T-cell (primary cell): ENCODE measurements at regions of chr3 and their contacts with region 1.

Region 1: DNA sequence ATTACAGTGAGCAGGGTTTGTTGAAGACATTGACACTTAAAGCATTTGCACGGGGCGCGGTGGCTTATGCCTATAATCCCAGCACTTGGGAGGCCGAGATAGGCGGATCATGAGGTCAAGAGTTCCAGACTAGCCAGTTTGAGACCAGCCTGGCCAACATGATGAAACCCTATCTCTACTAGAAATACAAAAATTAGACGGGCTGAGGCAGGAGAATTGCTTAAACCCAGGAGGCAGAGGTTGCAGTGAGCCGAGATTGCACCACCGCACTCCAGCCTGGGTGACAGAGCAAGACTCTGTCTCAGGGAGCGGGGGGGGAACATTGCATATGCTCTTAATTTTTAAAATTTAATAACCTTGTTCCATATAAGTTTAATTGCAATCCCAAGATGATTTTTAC is 11.9 kb downstream of the STT3B start:
- DNase-seq: no peak
- ATAC-seq: peak in 1 of 4 experiments; percentile 35
- H3K4me3 ChIP-seq: no peak overlapping the region
- H3K4me3 Mint-ChIP-seq: peak overlapping the region; percentile 22 to 46 (median 44)
- H3K27ac ChIP-seq: no peak overlapping the region
- H3K27ac Mint-ChIP-seq: peak overlapping the region; percentile 47 to 49
- H3K4me1 ChIP-seq: peaks cover 15 to 17% of the 10 kb centered on the region in 2 experiments
- H3K4me1 Mint-ChIP-seq: peaks cover 86 to 95% (median 87%) of the 10 kb centered on the region in 3 donors
- H3K27me3 ChIP-seq: no peaks in the 10 kb centered on the region
- H3K27me3 Mint-ChIP-seq: no peaks in the 10 kb centered on the region

Region 2: GRCh38 chr3:31485196-31485595 is 59.4 kb before region 1 on chr3:
- CTCF ChIA-PET with region 1: interaction called in 1 of 2 experiments, 10 read pairs
- POLR2A ChIA-PET with region 1: no interaction called
- DNase-seq: no peak
- ATAC-seq: no peak
- H3K4me3 ChIP-seq: no peak overlapping the region
- H3K4me3 Mint-ChIP-seq: no peak overlapping the region
- H3K27ac ChIP-seq: no peak overlapping the region
- H3K27ac Mint-ChIP-seq: no peak overlapping the region
- H3K4me1 ChIP-seq: no peaks in the 10 kb centered on the region
- H3K4me1 Mint-ChIP-seq: peaks cover 0 to 6% (median 5%) of the 10 kb centered on the region in 3 donors
- H3K27me3 ChIP-seq: no peaks in the 10 kb centered on the region
- H3K27me3 Mint-ChIP-seq: no peaks in the 10 kb centered on the region

Region 3: DNA sequence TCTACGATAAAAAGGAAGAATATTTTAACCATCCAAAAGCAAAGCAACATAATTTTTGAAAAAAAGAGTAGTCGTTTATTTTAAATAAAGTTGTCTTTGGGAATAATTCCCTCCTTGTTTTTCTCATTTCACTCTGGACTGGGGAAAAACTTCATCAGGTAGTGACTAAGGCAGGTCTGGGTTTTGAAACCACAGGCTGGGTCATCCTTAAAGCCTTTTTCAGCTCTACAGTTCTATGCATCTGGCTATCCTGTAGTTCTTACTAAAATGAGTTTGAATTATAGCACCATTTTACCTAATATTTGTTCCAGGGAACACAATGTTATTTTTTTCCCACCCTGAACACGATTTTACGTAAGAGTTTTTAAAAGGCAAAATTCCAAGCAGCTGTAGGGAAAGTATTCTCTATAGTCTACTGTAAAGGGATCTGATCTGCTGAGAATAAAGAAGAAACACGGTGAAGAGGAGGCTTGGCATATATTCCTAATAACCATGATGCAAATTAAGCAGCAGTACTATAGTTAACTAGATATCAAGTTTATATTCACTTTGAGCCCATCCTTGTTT is 328.7 kb after region 1 on chr3:
- CTCF ChIA-PET with region 1: no interaction called
- POLR2A ChIA-PET with region 1: no interaction called
- DNase-seq: no peak
- ATAC-seq: no peak
- H3K4me3 ChIP-seq: no peak overlapping the region
- H3K4me3 Mint-ChIP-seq: no peak overlapping the region
- H3K27ac ChIP-seq: no peak overlapping the region
- H3K27ac Mint-ChIP-seq: no peak overlapping the region
- H3K4me1 ChIP-seq: no peaks in the 10 kb centered on the region
- H3K4me1 Mint-ChIP-seq: no peaks in the 10 kb centered on the region
- H3K27me3 ChIP-seq: no peaks in the 10 kb centered on the region
- H3K27me3 Mint-ChIP-seq: no peaks in the 10 kb centered on the region